ENCODE measurements at regions of chr7 and their contacts with region 1.

Region 1: GRCh38 chr7:47254081-47255006 is 327.6 kb downstream of the TNS3 start:
- DNase-seq: peak; percentile 87
- H3K4me3 Mint-ChIP-seq: peak overlapping the region; percentile 57
- H3K27ac Mint-ChIP-seq: no peak overlapping the region
- H3K4me1 Mint-ChIP-seq: peaks cover 9% of the 10 kb centered on the region
- H3K27me3 Mint-ChIP-seq: peaks cover 19% of the 10 kb centered on the region

Region 2: GRCh38 chr7:45923290-45923689 is 1331.1 kb before region 1 on chr7:
- intact Hi-C with region 1: loop called (anchors 10 kb)
- DNase-seq: peak; percentile 86
- H3K4me3 Mint-ChIP-seq: peak overlapping the region; percentile 33
- H3K27ac Mint-ChIP-seq: no peak overlapping the region
- H3K4me1 Mint-ChIP-seq: peaks cover 20% of the 10 kb centered on the region
- H3K27me3 Mint-ChIP-seq: peaks cover 55% of the 10 kb centered on the region

Region 3: DNA sequence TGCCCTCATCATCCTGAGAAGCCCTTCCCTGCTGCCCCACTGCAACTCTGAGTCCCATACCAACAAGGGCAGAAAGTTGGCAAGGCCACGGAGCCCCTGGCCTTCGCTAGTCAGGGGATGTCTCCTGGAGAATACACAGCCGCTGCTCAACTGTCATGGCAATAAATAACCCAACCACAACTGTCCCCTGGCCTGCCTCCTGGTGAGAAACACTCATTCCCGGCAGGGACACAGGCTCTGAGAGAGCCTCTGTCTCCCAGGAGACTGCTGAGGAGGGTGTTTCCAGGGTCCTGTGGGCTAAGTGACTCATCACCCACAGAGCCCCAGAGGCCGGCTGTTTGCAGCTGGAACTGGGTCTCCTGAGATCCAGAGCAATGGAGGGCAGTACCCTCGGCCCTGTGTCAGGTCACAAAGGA is 26.6 kb before region 1 on chr7:
- intact Hi-C with region 1: no loop called
- DNase-seq: peak; percentile 43
- H3K4me3 Mint-ChIP-seq: no peak overlapping the region
- H3K27ac Mint-ChIP-seq: no peak overlapping the region
- H3K4me1 Mint-ChIP-seq: no peaks in the 10 kb centered on the region
- H3K27me3 Mint-ChIP-seq: no peaks in the 10 kb centered on the region

Region 4: GRCh38 chr7:47818796-47819606 is 564.7 kb after region 1 on chr7:
- intact Hi-C with region 1: loop called (anchors 5 kb)
- DNase-seq: peak; percentile 84
- H3K4me3 Mint-ChIP-seq: no peak overlapping the region
- H3K27ac Mint-ChIP-seq: no peak overlapping the region
- H3K4me1 Mint-ChIP-seq: no peaks in the 10 kb centered on the region
- H3K27me3 Mint-ChIP-seq: no peaks in the 10 kb centered on the region

Measured in activated CD4-positive, alpha-beta T cell treated with anti-CD3 and anti-CD28 coated beads, Interleukin-2, amount 10 ng/mL, durations not matched to agents 24 days and 14 days (primary cell).